Activated T-helper 2 cell treated with anti-CD3 and anti-CD28 coated beads, Interferon-gamma antibody, Interleukin-2, Interleukin-4, amounts not matched to agents 10 μg/mL and 5 μg/mL and 100 μg/mL, durations not matched to agents 14 hours and 24 hours and 36 hours (primary cell): ENCODE measurements at regions of chr3 and their contacts with region 1.

Region 1: GRCh38 chr3:56801662-56802377 is at the start of gene ARHGEF3:
- DNase-seq: peak; percentile 79
- H3K4me3 Mint-ChIP-seq: peak within 1 kb of the TSS; percentile 95
- H3K27ac Mint-ChIP-seq: peak within 1 kb of the TSS; percentile 85
- H3K4me1 Mint-ChIP-seq: peaks cover 36% of the 10 kb centered on the region
- H3K27me3 Mint-ChIP-seq: no peaks in the 10 kb centered on the region
- total RNA-seq, gene ARHGEF3: 38.3 and 38.6 TPM in 2 replicates

Region 2: GRCh38 chr3:56725175-56725574 is 76.6 kb before region 1 on chr3:
- intact Hi-C with region 1: loop called (anchors 1 kb)
- DNase-seq: peak; percentile 69
- H3K4me3 Mint-ChIP-seq: peak overlapping the region; percentile 69
- H3K27ac Mint-ChIP-seq: peak overlapping the region; percentile 84
- H3K4me1 Mint-ChIP-seq: peaks cover 36% of the 10 kb centered on the region
- H3K27me3 Mint-ChIP-seq: no peaks in the 10 kb centered on the region

Region 3: DNA sequence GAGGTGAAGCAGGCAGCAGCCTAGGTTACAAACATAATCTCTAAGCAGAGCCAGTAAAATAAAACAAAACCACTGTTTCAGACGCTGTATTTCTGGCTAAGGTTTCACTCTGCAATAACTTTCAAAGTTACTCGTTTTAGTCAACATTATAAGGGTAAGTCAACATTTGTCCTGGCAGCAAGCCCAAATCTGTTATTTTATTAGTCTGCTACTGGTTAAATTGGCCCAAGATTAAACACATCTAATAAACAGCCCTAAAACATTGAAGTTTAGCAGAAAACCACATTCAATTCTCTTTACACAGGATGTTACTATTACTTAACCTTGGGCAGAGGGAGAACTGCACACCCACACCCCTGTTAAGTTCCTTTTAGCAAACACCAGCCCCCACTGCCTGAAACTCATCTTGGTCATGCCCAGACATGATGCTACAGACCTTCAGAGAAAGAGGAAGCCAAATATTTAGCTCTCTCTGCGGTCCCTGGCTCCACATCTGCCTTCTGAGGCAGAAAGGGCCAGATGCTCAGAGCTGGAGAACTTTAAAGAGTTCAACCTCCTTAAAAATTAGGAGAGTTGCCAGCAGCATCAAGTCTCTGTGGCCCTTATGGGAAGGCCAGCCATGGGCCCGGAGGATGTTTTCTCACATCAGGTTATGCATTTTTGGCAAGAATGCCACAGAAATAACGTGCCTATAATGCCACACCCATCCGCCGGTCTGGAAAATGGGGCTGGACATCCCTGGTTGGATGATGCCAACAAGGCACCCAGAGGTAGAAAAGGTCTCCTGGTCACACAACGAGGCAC is 18.0 kb before region 1 on chr3:
- intact Hi-C with region 1: loop called (anchors 1 kb)
- DNase-seq: peak; percentile 70
- H3K4me3 Mint-ChIP-seq: peak overlapping the region; percentile 76
- H3K27ac Mint-ChIP-seq: peak overlapping the region; percentile 95
- H3K4me1 Mint-ChIP-seq: peaks cover 80% of the 10 kb centered on the region
- H3K27me3 Mint-ChIP-seq: no peaks in the 10 kb centered on the region

Region 4: GRCh38 chr3:56878074-56878473 is 76.3 kb after region 1 on chr3:
- intact Hi-C with region 1: loop called (anchors 5 kb)
- DNase-seq: peak; percentile 22
- H3K4me3 Mint-ChIP-seq: peak overlapping the region; percentile 40
- H3K27ac Mint-ChIP-seq: peak overlapping the region; percentile 94
- H3K4me1 Mint-ChIP-seq: peaks cover 80% of the 10 kb centered on the region
- H3K27me3 Mint-ChIP-seq: no peaks in the 10 kb centered on the region

Region 5: DNA sequence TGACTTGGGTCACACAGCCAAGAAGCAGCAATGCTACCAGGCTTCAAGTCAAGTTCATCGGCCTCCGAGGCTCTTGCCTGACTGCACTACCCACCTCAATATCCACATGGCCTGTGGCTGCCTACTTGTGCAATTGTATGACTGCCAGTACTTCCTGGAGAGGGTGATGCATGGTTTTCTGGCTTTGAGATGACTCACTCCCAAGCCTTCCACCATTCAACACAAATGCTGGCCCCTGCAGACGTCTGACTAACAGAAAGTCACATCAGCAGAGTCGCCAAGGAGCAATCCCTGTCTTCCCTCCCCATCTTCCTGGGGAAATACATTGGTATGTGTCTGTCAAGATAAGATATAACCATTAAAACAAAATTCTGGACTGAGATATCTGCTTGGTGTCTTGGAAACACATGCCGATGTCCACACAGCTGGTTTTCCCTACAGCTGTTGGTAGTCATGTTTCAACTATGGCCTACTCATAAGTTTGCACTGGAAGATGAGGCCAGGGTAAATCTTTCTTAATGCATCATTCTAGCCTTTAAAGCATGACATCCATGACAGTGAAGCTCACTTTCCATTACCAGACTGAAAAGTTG is 179.1 kb after region 1 on chr3:
- intact Hi-C with region 1: loop called (anchors 2 kb)
- DNase-seq: peak; percentile 22
- H3K4me3 Mint-ChIP-seq: no peak overlapping the region
- H3K27ac Mint-ChIP-seq: peak overlapping the region; percentile 72
- H3K4me1 Mint-ChIP-seq: peaks cover 26% of the 10 kb centered on the region
- H3K27me3 Mint-ChIP-seq: no peaks in the 10 kb centered on the region